Activated naive CD4-positive, alpha-beta T cell treated with anti-CD3 and anti-CD28 coated beads for 36 hours (primary cell): ENCODE measurements at regions of chr19 and their contacts with region 1.

Region 1: GRCh38 chr19:3100081-3100864 is 6.1 kb downstream of the GNA11 start:
- DNase-seq: no peak
- H3K4me3 Mint-ChIP-seq: no peak overlapping the region
- H3K27ac Mint-ChIP-seq: no peak overlapping the region
- H3K4me1 Mint-ChIP-seq: peaks cover 43% of the 10 kb centered on the region
- H3K27me3 Mint-ChIP-seq: no peaks in the 10 kb centered on the region

Region 2: GRCh38 chr19:2962045-2962561 is 138.2 kb before region 1 on chr19:
- CTCF ChIA-PET with region 1: interaction called, 50 read pairs
- intact Hi-C with region 1: loop called (anchors 1 kb)
- DNase-seq: peak; percentile 58
- H3K4me3 Mint-ChIP-seq: peak overlapping the region; percentile 22
- H3K27ac Mint-ChIP-seq: no peak overlapping the region
- H3K4me1 Mint-ChIP-seq: peaks cover 3% of the 10 kb centered on the region
- H3K27me3 Mint-ChIP-seq: no peaks in the 10 kb centered on the region

Region 3: GRCh38 chr19:3075895-3076431 is 24.3 kb before region 1 on chr19:
- CTCF ChIA-PET with region 1: interaction called, 64 read pairs
- intact Hi-C with region 1: loop called (anchors 1 kb)
- DNase-seq: peak; percentile 80
- H3K4me3 Mint-ChIP-seq: peak overlapping the region; percentile 38
- H3K27ac Mint-ChIP-seq: no peak overlapping the region
- H3K4me1 Mint-ChIP-seq: no peaks in the 10 kb centered on the region
- H3K27me3 Mint-ChIP-seq: no peaks in the 10 kb centered on the region

Region 4: GRCh38 chr19:3176603-3177501 is 76.6 kb after region 1 on chr19:
- CTCF ChIA-PET with region 1: no interaction called
- intact Hi-C with region 1: no loop called
- DNase-seq: peak; percentile 84
- H3K4me3 Mint-ChIP-seq: peak overlapping the region; percentile 68
- H3K27ac Mint-ChIP-seq: peak overlapping the region; percentile 84
- H3K4me1 Mint-ChIP-seq: peaks cover 20% of the 10 kb centered on the region
- H3K27me3 Mint-ChIP-seq: no peaks in the 10 kb centered on the region